PC-3 (cell line): ENCODE measurements at regions of chr17 and their contacts with region 1.

Region 1: GRCh38 chr17:32486111-32486700 is 587 bp upstream of the CDK5R1 start:
- DNase-seq: peak; percentile 73
- ATAC-seq: peak; percentile 74
- H3K4me3 ChIP-seq: peak overlapping the region; percentile 50; the same call in 1 of the 2 replicates
- H3K27ac ChIP-seq: no peak overlapping the region
- H3K4me1 ChIP-seq: peaks cover 4% of the 10 kb centered on the region; the same call in 1 of the 2 replicates
- H3K27me3 ChIP-seq: no peaks in the 10 kb centered on the region
- CTCF ChIP-seq: no peak

Region 2: GRCh38 chr17:32461853-32462617 is 24.2 kb before region 1 on chr17:
- CTCF ChIA-PET with region 1: no interaction called
- POLR2A ChIA-PET with region 1: no interaction called
- intact Hi-C with region 1: no loop called
- DNase-seq: peak; percentile 62
- ATAC-seq: peak; percentile 45
- H3K4me3 ChIP-seq: no peak overlapping the region
- H3K27ac ChIP-seq: no peak overlapping the region
- H3K4me1 ChIP-seq: no peaks in the 10 kb centered on the region
- H3K27me3 ChIP-seq: no peaks in the 10 kb centered on the region
- CTCF ChIP-seq: peak; percentile 62

Region 3: GRCh38 chr17:32528825-32529224 is 42.6 kb after region 1 on chr17:
- CTCF ChIA-PET with region 1: no interaction called
- POLR2A ChIA-PET with region 1: no interaction called
- intact Hi-C with region 1: no loop called
- DNase-seq: no peak
- ATAC-seq: no peak
- H3K4me3 ChIP-seq: no peak overlapping the region
- H3K27ac ChIP-seq: no peak overlapping the region
- H3K4me1 ChIP-seq: no peaks in the 10 kb centered on the region
- H3K27me3 ChIP-seq: no peaks in the 10 kb centered on the region
- CTCF ChIP-seq: no peak

Region 4: GRCh38 chr17:32609085-32609484 is 122.9 kb after region 1 on chr17:
- CTCF ChIA-PET with region 1: no interaction called
- POLR2A ChIA-PET with region 1: no interaction called
- intact Hi-C with region 1: loop called (anchors 10 kb)
- DNase-seq: peak; percentile 66
- ATAC-seq: peak; percentile 56
- H3K4me3 ChIP-seq: no peak overlapping the region
- H3K27ac ChIP-seq: no peak overlapping the region
- H3K4me1 ChIP-seq: no peaks in the 10 kb centered on the region
- H3K27me3 ChIP-seq: no peaks in the 10 kb centered on the region
- CTCF ChIP-seq: peak; percentile 61